Natural killer cell (primary cell): ENCODE measurements at regions of chr21 and their contacts with region 1.

Region 1: DNA sequence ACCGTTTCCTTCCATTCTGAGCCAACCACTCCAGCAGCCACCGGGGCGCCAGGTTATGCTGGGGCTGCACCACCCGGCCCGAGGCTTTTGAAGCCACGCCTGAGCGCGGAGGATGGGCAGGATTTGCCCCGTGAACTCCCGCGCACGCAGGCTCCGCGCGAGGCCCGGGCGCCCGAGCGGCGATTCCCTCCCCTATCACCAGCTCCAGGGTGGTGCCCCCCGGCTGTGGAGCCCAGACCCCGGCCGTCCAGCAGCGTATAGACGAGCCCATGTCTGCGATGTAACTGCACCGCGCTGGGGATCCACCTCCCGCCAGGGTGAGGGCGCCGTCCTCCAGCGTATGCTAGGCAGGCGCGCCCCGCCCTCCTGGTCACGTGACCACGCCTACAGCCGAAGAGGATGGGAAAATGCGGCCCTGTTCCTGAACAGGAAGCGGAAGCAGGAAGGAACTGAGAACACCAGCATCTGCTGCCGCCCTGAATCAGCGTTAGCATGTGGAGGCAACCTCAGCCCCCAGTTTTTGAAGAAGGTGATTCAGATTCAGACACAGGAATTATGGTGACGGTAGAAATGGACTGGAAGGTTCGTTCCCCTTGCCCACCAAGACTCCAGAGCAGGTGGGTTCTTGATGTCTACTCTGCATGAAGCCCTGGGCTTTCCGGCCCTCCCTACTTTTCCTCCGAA is 46.0 kb downstream of the VPS26C start:
- DNase-seq: peak; percentile 85 to 95
- ATAC-seq: peak; percentile 67 to 85 (median 76)
- H3K4me3 ChIP-seq: peak overlapping the region; percentile 69
- H3K4me3 Mint-ChIP-seq: peak overlapping the region; percentile 95
- H3K27ac ChIP-seq: peak overlapping the region; percentile 77
- H3K27ac Mint-ChIP-seq: peak overlapping the region; percentile 89 to 91
- H3K4me1 ChIP-seq: peaks cover 44% of the 10 kb centered on the region
- H3K4me1 Mint-ChIP-seq: peaks cover 51 to 53% of the 10 kb centered on the region in 2 donors
- H3K27me3 ChIP-seq: no peaks in the 10 kb centered on the region
- H3K27me3 Mint-ChIP-seq: no peaks in the 10 kb centered on the region
- CTCF ChIP-seq: no peak

Region 2: DNA sequence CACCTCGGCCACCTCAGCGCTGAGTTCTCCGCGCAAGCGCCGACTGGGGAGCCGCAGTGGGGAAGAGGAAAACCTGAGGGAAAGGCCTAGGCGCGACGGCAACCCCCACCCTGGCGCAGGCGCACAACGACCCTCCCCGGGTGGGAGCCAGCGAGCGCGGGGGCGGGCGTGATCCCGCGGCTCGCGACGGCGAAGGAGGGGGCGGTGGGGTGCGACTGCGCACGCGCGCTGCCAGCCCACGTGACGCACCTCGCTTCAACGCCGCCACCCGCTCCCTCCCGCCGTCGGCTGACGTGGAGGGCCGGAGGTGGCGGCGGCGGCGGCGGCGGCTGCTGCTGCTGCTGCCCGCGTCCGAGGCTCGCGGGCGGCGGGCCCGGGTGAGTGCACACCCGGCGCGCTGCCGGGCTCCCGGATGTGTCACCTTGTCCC is 148.1 kb before region 1 on chr21 and contains the starts of genes PIGP and TTC3:
- intact Hi-C with region 1: loop called (anchors 10 kb)
- DNase-seq: peak; percentile 96 to 99
- ATAC-seq: peak; percentile 69 to 86 (median 77)
- H3K4me3 ChIP-seq: peak within 1 kb of the TSS; percentile 96
- H3K4me3 Mint-ChIP-seq: peak within 1 kb of the TSS; percentile 97
- H3K27ac ChIP-seq: peak within 1 kb of the TSS; percentile 100
- H3K27ac Mint-ChIP-seq: peak within 1 kb of the TSS; percentile 93 to 98
- H3K4me1 ChIP-seq: peaks cover 17% of the 10 kb centered on the region
- H3K4me1 Mint-ChIP-seq: peaks cover 29 to 37% of the 10 kb centered on the region in 2 donors
- H3K27me3 ChIP-seq: no peaks in the 10 kb centered on the region
- H3K27me3 Mint-ChIP-seq: no peaks in the 10 kb centered on the region
- CTCF ChIP-seq: no peak
- total RNA-seq, gene PIGP: 6.5 to 10.4 (median 8.5) TPM
- total RNA-seq, gene TTC3: 83.1 to 97.4 (median 88.3) TPM

Region 3: DNA sequence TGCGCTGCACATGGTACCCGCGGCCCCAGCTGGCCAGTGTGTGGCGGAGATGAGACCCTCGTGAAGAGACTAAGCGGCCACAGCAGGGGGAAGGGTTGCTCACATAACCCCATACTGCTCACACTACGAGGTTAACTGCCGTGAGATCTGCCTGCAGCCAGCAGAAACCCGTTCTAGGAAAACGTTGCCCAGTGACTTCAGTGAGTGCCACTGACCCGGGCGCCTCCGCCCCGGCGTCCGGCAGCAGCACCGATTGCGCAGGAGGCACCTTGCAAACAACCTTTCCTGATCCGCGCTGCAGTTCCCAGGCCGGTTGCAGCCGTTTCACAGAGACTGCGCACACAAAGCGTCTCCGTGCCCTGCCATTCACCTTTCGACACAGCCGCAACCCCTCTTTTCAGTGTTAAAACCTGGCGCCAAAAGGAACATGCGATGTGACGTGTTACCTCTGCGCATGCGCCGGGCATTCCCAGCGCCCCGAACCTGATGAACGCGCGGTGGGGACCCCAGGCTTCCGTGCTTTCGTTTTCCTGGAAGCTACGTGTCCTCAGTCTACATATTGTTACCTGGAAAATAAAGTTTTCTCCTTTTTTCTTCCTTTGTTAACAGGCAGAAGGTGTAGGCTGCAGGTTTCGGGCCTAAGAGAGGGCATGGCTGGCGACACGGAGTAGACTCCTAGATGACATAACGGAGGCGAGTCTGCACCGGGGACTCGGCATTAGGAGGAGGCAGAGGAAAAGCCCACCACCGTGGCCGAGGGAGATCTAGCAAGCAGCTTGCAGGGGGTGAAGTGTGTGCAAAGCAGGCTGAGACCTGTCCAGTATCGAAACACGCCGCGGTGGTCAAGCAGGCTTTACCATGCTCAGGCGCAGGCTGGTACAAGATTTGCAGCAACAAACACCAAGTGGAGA is 37.1 kb after region 1 on chr21:
- intact Hi-C with region 1: loop called (anchors 2 kb)
- DNase-seq: peak; percentile 76 to 94
- ATAC-seq: peak; percentile 66 to 80 (median 73)
- H3K4me3 ChIP-seq: peak overlapping the region; percentile 76
- H3K4me3 Mint-ChIP-seq: peak overlapping the region; percentile 93
- H3K27ac ChIP-seq: peak overlapping the region; percentile 86
- H3K27ac Mint-ChIP-seq: peak overlapping the region; percentile 91 to 98
- H3K4me1 ChIP-seq: peaks cover 21% of the 10 kb centered on the region
- H3K4me1 Mint-ChIP-seq: peaks cover 38 to 39% of the 10 kb centered on the region in 2 donors
- H3K27me3 ChIP-seq: no peaks in the 10 kb centered on the region
- H3K27me3 Mint-ChIP-seq: no peaks in the 10 kb centered on the region
- CTCF ChIP-seq: no peak

Region 4: GRCh38 chr21:37267269-37268184 is 46.4 kb after region 1 on chr21 and contains the start of gene VPS26C:
- intact Hi-C with region 1: loop called (anchors 1 kb)
- DNase-seq: peak; percentile 94 to 99
- ATAC-seq: peak; percentile 85 to 95 (median 86)
- H3K4me3 ChIP-seq: peak within 1 kb of the TSS; percentile 90
- H3K4me3 Mint-ChIP-seq: peak within 1 kb of the TSS; percentile 97
- H3K27ac ChIP-seq: peak within 1 kb of the TSS; percentile 99
- H3K27ac Mint-ChIP-seq: peak within 1 kb of the TSS; percentile 95 to 99
- H3K4me1 ChIP-seq: peaks cover 22% of the 10 kb centered on the region
- H3K4me1 Mint-ChIP-seq: peaks cover 32 to 52% of the 10 kb centered on the region in 2 donors
- H3K27me3 ChIP-seq: no peaks in the 10 kb centered on the region
- H3K27me3 Mint-ChIP-seq: no peaks in the 10 kb centered on the region
- CTCF ChIP-seq: no peak
- total RNA-seq, gene VPS26C: 71.1 to 84.7 (median 72.2) TPM

Region 5: DNA sequence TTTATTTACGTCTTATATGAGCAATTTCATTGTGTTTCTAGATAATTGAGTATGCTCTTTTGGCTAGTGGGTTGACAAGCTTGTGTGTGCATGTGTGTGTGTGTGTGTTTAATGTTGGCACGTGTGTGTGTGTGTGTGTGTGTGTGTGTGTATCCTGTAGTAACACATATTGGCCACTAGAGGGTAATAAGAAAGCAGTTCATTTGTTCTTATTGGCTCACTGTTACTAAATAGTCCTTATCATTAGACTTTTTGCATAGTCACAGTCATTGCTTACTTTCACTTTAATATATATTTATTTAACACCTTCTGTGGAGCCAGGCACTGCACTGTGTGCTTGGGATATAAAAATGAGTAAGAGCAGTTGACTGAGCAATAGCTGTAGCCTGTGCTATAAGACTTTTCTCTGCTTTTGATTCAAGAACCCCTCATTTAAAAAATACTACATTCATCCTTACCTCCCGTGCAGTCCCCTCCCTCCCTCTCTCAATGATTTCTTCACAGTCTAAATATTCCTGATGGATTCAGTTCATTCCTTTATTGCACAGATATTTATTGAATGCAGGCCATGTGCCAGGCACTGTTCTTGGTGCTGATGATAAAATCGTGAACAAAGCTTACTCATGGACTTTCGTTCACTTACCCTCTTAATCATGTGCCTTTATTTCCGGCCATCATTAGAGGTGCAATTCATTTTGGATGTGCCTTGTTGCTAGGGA is 242.1 kb after region 1 on chr21:
- intact Hi-C with region 1: loop called (anchors 2 kb)
- DNase-seq: peak in 1 of 2 donors; percentile 66
- ATAC-seq: peak; percentile 60 to 81 (median 60)
- H3K4me3 ChIP-seq: no peak overlapping the region
- H3K4me3 Mint-ChIP-seq: peak overlapping the region; percentile 79
- H3K27ac ChIP-seq: peak overlapping the region; percentile 3
- H3K27ac Mint-ChIP-seq: peak overlapping the region; percentile 87 to 91
- H3K4me1 ChIP-seq: peaks cover 23% of the 10 kb centered on the region
- H3K4me1 Mint-ChIP-seq: peaks cover 76 to 80% of the 10 kb centered on the region in 2 donors
- H3K27me3 ChIP-seq: no peaks in the 10 kb centered on the region
- H3K27me3 Mint-ChIP-seq: no peaks in the 10 kb centered on the region
- CTCF ChIP-seq: peak; percentile 27

Region 6: DNA sequence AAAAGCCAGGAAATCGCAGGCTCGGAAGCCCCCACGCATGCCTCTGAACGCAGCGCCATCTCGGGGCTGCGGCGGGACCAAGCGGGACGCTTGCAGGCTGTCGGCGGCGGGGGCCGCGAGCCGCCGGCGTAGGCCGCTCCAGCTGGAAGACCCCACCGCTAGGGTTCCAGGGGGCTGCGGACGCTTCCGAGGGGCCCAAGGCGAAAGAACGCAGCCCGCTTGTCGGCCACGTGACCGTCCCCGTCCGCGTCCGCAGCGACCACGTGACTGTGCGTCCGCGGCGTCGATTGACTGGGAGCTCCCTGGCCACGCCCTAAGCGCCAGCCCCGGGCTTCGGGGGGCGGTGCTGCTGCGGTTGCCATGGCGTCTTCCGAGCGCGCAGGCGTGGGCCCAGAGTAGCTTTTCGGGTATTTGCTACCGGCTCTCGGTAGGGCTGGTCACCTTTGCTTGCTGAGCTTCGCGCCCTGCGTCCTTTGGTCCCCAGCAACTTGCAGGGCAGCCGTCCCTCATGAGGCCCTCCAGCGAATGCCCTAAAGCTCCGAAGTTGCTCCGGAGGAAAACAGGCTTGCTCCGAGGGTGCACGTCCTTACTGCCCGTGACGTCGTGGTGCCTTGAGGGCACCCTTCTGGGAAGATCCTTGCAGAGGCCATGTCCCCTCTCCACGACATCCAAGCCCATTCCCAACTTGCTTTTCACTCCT is 342.7 kb after region 1 on chr21:
- intact Hi-C with region 1: loop called (anchors 5 kb)
- DNase-seq: peak; percentile 92 to 97
- ATAC-seq: peak; percentile 73 to 94 (median 87)
- H3K4me3 ChIP-seq: peak overlapping the region; percentile 87
- H3K4me3 Mint-ChIP-seq: peak overlapping the region; percentile 97
- H3K27ac ChIP-seq: peak overlapping the region; percentile 95
- H3K27ac Mint-ChIP-seq: peak overlapping the region; percentile 98 to 100
- H3K4me1 ChIP-seq: peaks cover 15% of the 10 kb centered on the region
- H3K4me1 Mint-ChIP-seq: peaks cover 18 to 28% of the 10 kb centered on the region in 2 donors
- H3K27me3 ChIP-seq: no peaks in the 10 kb centered on the region
- H3K27me3 Mint-ChIP-seq: peaks cover 0 to 3% of the 10 kb centered on the region in 2 donors
- CTCF ChIP-seq: peak; percentile 37